Endothelial cell of umbilical vein (primary cell): ENCODE measurements at regions of chr14 and their contacts with region 1.

Region 1: DNA sequence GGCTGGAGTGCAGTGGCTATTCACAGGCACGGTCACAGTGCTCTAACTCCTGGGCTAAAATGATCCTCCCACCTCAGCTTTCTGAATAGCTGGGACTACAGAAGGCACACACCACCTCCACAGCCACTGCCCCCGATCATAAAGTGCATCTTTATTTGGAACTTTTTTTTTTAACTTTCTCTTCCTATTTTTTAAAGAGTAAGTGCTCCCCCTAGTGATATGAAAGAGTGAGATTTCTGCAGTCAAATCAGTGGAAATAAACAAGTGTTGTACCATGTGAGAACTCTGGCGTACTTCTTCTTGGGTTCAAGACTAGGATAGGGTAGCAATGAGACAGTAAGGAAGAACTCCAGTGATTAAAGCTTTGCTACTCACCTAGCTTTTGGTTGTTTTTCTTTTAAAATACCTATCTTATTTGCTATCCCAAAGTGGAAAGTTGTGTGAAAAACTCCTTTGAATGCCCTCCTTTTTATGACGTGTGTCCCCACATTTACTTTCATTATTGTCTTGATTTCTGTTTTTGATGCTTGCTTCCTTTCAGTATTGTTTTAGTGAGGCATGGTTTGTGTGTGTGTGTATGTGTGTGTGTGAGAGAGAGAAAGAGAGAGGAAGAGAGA is 6.6 kb downstream of the PPP4R4 start:
- DNase-seq: peak; percentile 48
- H3K4me3 ChIP-seq: no peak overlapping the region
- H3K27ac ChIP-seq: no peak overlapping the region
- H3K4me1 ChIP-seq: no peaks in the 10 kb centered on the region
- H3K27me3 ChIP-seq: peaks cover 22 to 54% of the 10 kb centered on the region in 2 experiments
- CTCF ChIP-seq: peak; percentile 30 to 40
- POLR2A ChIP-seq: no peak

Region 2: GRCh38 chr14:93946104-93946503 is 234.7 kb before region 1 on chr14:
- CTCF ChIA-PET with region 1: no interaction called
- POLR2A ChIA-PET with region 1: no interaction called
- dilution Hi-C with region 1: no loop called
- intact Hi-C with region 1: no loop called
- DNase-seq: no peak
- H3K4me3 ChIP-seq: no peak overlapping the region
- H3K27ac ChIP-seq: no peak overlapping the region
- H3K4me1 ChIP-seq: peaks cover 5% of the 10 kb centered on the region
- H3K27me3 ChIP-seq: peaks cover 0 to 1% of the 10 kb centered on the region in 2 experiments
- CTCF ChIP-seq: no peak
- POLR2A ChIP-seq: no peak

Region 3: GRCh38 chr14:94026173-94026888 is 154.4 kb before region 1 on chr14 and contains the start of gene OTUB2:
- CTCF ChIA-PET with region 1: interaction called, 3 read pairs
- POLR2A ChIA-PET with region 1: no interaction called
- dilution Hi-C with region 1: no loop called
- intact Hi-C with region 1: loop called (anchors 2 kb)
- DNase-seq: peak; percentile 99
- H3K4me3 ChIP-seq: peak within 1 kb of the TSS in 2 of 3 experiments; percentile 29 to 50
- H3K27ac ChIP-seq: no peak within 1 kb of the TSS
- H3K4me1 ChIP-seq: peaks cover 10% of the 10 kb centered on the region
- H3K27me3 ChIP-seq: peaks cover 0 to 4% of the 10 kb centered on the region in 2 experiments
- CTCF ChIP-seq: no peak
- POLR2A ChIP-seq: no peak
- total RNA-seq, gene OTUB2: 1.1 and 1.6 TPM in 2 replicates

Region 4: DNA sequence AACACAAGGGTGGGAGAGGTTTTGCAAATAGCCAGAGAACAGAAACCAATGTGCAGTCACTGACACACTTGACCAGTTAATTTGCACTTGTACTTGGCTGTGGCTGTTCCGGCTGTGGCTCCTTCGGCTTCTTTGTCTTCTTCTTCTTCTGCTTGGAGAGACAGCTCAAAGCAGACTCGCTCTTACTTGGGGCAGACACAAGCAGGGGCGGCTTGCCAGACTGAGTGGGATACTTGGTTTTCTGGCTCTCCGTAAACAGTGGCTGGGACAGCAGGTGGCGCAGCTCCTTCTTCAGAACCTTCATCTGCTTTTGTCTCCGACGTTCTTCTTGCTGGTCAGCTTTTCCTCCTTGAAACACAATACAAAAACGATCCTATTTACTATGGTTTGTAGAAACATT is 129.6 kb before region 1 on chr14:
- CTCF ChIA-PET with region 1: interaction called, 10 read pairs
- POLR2A ChIA-PET with region 1: no interaction called
- dilution Hi-C with region 1: no loop called
- intact Hi-C with region 1: no loop called
- DNase-seq: peak; percentile 40
- H3K4me3 ChIP-seq: no peak overlapping the region
- H3K27ac ChIP-seq: no peak overlapping the region
- H3K4me1 ChIP-seq: peaks cover 3% of the 10 kb centered on the region
- H3K27me3 ChIP-seq: no peaks in the 10 kb centered on the region
- CTCF ChIP-seq: peak in 1 of 2 donors; percentile 59
- POLR2A ChIP-seq: no peak

Region 5: GRCh38 chr14:94066089-94066676 is 114.6 kb before region 1 on chr14:
- CTCF ChIA-PET with region 1: no interaction called
- POLR2A ChIA-PET with region 1: no interaction called
- dilution Hi-C with region 1: no loop called
- intact Hi-C with region 1: no loop called
- DNase-seq: no peak
- H3K4me3 ChIP-seq: no peak overlapping the region
- H3K27ac ChIP-seq: no peak overlapping the region
- H3K4me1 ChIP-seq: peaks cover 13% of the 10 kb centered on the region
- H3K27me3 ChIP-seq: no peaks in the 10 kb centered on the region
- CTCF ChIP-seq: no peak
- POLR2A ChIP-seq: no peak

Region 6: DNA sequence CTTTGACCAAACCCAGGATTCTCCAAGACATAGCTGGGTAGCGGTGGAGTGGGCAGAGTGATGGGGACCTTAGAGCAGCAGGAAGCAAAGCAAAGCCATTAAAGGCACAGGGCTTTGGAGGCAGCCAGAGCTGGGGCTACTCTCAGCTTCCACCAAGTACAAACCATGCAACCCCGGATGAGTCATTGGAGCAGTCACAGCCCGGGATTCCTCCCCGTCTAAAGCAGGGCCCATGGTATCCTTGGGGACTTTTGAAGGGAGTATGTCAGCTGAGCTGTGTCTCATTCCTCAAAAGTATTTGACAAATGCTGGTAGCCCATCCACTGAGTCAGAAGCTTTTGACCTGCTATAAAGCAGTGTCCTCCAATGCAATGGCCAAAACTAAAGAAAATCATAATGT is 79.9 kb before region 1 on chr14:
- CTCF ChIA-PET with region 1: no interaction called
- POLR2A ChIA-PET with region 1: no interaction called
- dilution Hi-C with region 1: no loop called
- intact Hi-C with region 1: no loop called
- DNase-seq: no peak
- H3K4me3 ChIP-seq: no peak overlapping the region
- H3K27ac ChIP-seq: no peak overlapping the region
- H3K4me1 ChIP-seq: no peaks in the 10 kb centered on the region
- H3K27me3 ChIP-seq: no peaks in the 10 kb centered on the region
- CTCF ChIP-seq: no peak
- POLR2A ChIP-seq: no peak